ENCODE measurements at regions of chr4 and their contacts with region 1.

Region 1: GRCh38 chr4:174631901-174632758 is 109.8 kb upstream of the HPGD start:
- DNase-seq: peak; percentile 19
- H3K4me3 ChIP-seq: peak overlapping the region in 1 of 2 experiments; percentile 43; a peak in 1 of 4 replicates
- H3K27ac ChIP-seq: no peak overlapping the region
- H3K4me1 ChIP-seq: no peaks in the 10 kb centered on the region; a peak in 1 of 4 replicates
- H3K27me3 ChIP-seq: no peaks in the 10 kb centered on the region
- CTCF ChIP-seq: peak; percentile 87
- EP300 ChIP-seq: no peak
- RAD21 ChIP-seq: peak; percentile 82

Region 2: GRCh38 chr4:174377613-174378012 is 254.5 kb before region 1 on chr4:
- CTCF ChIA-PET with region 1: interaction called, 13 read pairs
- POLR2A ChIA-PET with region 1: no interaction called
- DNase-seq: no peak
- H3K4me3 ChIP-seq: no peak overlapping the region
- H3K27ac ChIP-seq: no peak overlapping the region
- H3K4me1 ChIP-seq: no peaks in the 10 kb centered on the region; a peak in 1 of 4 replicates
- H3K27me3 ChIP-seq: no peaks in the 10 kb centered on the region; the same call in 1 of the 2 replicates
- CTCF ChIP-seq: no peak
- EP300 ChIP-seq: no peak
- RAD21 ChIP-seq: no peak

Region 3: GRCh38 chr4:174648812-174649211 is 16.7 kb after region 1 on chr4:
- CTCF ChIA-PET with region 1: interaction called, 12 read pairs
- POLR2A ChIA-PET with region 1: no interaction called
- DNase-seq: no peak
- H3K4me3 ChIP-seq: no peak overlapping the region
- H3K27ac ChIP-seq: no peak overlapping the region
- H3K4me1 ChIP-seq: no peaks in the 10 kb centered on the region
- H3K27me3 ChIP-seq: no peaks in the 10 kb centered on the region
- CTCF ChIP-seq: no peak
- EP300 ChIP-seq: no peak
- RAD21 ChIP-seq: no peak

Measured in SK-N-SH (cell line).